ENCODE measurements at regions of chr11 and their contacts with region 1.

Region 1: GRCh38 chr11:16820324-16821092 is 82.1 kb downstream of the C11orf58 start:
- DNase-seq: peak; percentile 85
- ATAC-seq: peak; percentile 94
- H3K4me3 Mint-ChIP-seq: no peak overlapping the region
- H3K27ac Mint-ChIP-seq: no peak overlapping the region
- H3K4me1 Mint-ChIP-seq: peaks cover 9% of the 10 kb centered on the region
- H3K27me3 Mint-ChIP-seq: no peaks in the 10 kb centered on the region
- CTCF ChIP-seq: peak; percentile 78

Region 2: DNA sequence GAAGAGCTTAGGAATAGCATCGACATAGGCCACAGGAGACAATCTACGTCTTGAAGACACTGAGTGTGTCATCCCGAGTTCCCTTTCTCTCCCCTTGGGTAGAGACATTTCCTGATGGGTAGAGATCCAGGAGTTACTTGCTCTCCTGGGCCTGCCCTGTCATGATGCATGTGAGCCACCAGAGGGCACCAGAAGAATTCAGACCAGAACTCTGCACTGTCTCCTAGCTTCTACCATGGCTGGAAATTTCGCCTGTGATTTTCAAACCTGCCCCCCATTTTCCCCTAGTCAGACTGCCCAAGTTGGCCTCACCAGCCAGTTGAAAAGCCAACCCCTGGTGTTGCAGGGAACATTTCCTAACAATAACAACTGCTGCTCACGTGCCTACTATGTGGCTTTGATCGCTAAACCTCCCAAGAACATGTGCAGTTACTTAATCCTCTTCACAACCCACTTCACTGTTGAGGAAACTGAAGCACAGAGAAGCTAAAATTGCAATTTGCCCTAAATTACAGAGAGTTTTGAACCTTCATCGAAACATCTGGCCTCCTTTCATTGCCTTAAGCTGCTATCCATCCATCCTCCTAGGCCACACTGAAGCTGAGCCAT is 34.9 kb before region 1 on chr11:
- CTCF ChIA-PET with region 1: interaction called, 12 read pairs
- POLR2A ChIA-PET with region 1: no interaction called
- DNase-seq: peak; percentile 79
- ATAC-seq: peak; percentile 85
- H3K4me3 Mint-ChIP-seq: no peak overlapping the region
- H3K27ac Mint-ChIP-seq: no peak overlapping the region
- H3K4me1 Mint-ChIP-seq: peaks cover 4% of the 10 kb centered on the region
- H3K27me3 Mint-ChIP-seq: no peaks in the 10 kb centered on the region
- CTCF ChIP-seq: peak; percentile 75

Region 3: DNA sequence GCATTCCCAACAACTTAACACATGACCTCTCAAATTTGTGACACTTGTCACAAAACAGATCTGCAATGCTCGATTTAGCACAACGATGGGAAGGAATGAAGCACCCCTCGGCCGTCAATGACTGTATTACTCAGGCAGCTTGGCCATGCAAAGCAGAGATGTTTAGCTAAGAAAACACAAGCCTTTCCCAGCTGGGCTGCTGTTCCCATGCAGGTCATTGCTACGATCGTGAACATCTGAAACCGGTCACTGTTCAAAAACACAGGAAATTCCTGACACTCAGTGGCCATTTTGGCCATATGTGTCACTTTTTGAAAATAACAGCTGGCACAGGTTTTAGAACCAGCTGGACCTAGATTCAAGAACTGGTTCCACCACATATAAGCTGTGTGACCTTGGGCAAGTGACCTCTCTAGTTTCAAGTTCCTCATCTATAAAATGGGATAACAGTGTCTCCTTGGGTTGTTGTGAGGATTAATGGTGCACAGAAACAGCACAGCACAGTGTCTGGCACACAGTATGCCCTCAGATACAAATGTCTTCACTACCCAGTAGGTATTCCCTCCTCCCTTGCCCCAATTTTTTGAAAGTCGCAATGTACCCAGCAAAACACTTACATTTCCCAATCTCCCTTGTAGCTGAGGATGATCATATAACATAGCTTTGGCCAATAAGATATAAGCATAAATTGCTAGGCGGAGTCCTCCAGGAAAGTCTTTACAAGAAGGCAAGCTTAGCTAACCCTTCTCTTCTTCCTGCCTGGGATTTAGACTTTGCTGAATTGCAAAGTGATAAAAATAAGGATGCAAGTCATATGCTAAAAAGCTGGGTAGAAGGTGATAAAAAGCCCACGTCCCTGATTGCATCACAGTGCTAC is 11.0 kb after region 1 on chr11:
- CTCF ChIA-PET with region 1: interaction called, 14 read pairs
- POLR2A ChIA-PET with region 1: no interaction called
- DNase-seq: no peak
- ATAC-seq: no peak
- H3K4me3 Mint-ChIP-seq: no peak overlapping the region
- H3K27ac Mint-ChIP-seq: no peak overlapping the region; the same call in 1 of the 2 replicates
- H3K4me1 Mint-ChIP-seq: peaks cover 15% of the 10 kb centered on the region; the same call in 1 of the 2 replicates
- H3K27me3 Mint-ChIP-seq: no peaks in the 10 kb centered on the region
- CTCF ChIP-seq: no peak

Region 4: GRCh38 chr11:16935518-16936302 is 115.2 kb after region 1 on chr11:
- CTCF ChIA-PET with region 1: interaction called, 10 read pairs
- POLR2A ChIA-PET with region 1: no interaction called
- DNase-seq: peak; percentile 45
- ATAC-seq: peak; percentile 91
- H3K4me3 Mint-ChIP-seq: no peak overlapping the region
- H3K27ac Mint-ChIP-seq: no peak overlapping the region; the same call in 1 of the 2 replicates
- H3K4me1 Mint-ChIP-seq: peaks cover 14% of the 10 kb centered on the region
- H3K27me3 Mint-ChIP-seq: no peaks in the 10 kb centered on the region; the same call in 1 of the 2 replicates
- CTCF ChIP-seq: peak; percentile 48; the same call in 1 of the 2 replicates

Region 5: GRCh38 chr11:17063171-17064002 is 242.9 kb after region 1 on chr11:
- CTCF ChIA-PET with region 1: interaction called, 35 read pairs
- POLR2A ChIA-PET with region 1: no interaction called
- DNase-seq: peak; percentile 88
- ATAC-seq: peak; percentile 99
- H3K4me3 Mint-ChIP-seq: no peak overlapping the region
- H3K27ac Mint-ChIP-seq: no peak overlapping the region
- H3K4me1 Mint-ChIP-seq: no peaks in the 10 kb centered on the region
- H3K27me3 Mint-ChIP-seq: no peaks in the 10 kb centered on the region
- CTCF ChIP-seq: peak; percentile 64

Measured in WTC11 (cell line).